ENCODE measurements at regions of chr4 and their contacts with region 1.

Region 1: DNA sequence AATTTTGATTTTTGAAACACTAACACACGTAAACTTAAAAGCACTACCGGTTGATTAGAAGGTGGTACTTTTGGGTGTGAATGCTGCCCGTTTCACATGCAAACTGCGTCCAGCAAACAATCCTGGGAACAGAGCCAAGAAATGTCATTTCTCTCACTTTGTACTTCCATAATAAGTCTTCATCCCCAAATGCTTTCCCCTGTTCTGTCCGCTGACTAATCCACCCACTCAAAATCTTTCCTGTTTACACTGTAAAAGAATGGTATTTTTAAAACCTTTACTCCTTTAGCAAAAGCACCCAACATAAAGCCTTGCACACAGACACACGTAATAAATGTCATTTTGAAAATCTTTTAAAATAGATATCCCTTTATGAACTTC is 39.1 kb upstream of the PDLIM5 start:
- DNase-seq: no peak

Region 2: DNA sequence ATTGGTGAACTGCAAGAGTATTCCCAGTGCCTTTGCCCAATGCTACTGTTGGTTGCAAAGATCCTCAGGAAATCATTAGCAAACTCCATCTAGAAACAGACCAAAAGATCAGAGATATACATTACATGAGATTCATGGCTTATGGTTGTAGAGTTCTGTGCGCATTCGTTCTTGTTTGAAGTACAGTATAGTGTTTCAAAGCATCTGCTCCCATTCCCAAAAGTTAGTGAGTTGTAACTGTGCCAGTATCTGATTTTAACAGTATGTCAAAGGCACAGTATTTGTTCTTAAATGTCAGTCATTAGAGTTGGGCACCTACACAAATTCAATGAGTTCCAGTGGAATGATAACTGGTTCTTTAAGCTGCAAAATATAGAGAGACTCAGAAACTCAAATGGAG is 898.8 kb before region 1 on chr4:
- intact Hi-C with region 1: loop called in 1 of 2 experiments (anchors 10 kb)
- DNase-seq: no peak

Region 3: GRCh38 chr4:94390804-94391410 is 21.7 kb before region 1 on chr4:
- intact Hi-C with region 1: no loop called
- DNase-seq: no peak

Region 4: DNA sequence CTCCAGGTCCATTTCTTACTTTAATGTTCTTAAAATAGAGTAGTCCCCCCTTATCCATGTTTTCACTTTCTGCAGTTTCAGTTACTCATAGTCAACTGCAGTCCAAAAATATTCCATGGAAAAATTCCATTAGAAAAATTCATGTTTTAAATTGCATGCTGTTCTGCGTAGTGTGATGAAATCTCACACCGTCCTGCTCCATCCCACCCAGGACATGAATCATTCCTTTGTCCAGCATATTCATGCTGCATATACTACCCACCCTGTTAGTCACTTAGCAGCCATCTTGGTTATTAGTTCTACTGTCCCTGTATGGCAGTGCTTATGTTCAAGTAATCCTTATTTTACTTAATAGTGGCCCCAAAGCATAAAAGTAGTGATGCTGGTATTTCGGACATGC is 33.7 kb after region 1 on chr4:
- intact Hi-C with region 1: loop called in 1 of 2 experiments (anchors 5 kb)
- DNase-seq: no peak

Region 5: GRCh38 chr4:94905511-94905910 is 492.9 kb after region 1 on chr4:
- intact Hi-C with region 1: no loop called
- DNase-seq: no peak

Measured in posterior vena cava (tissue), 2 donors.